BJ (cell line): ENCODE measurements at regions of chr5 and their contacts with region 1.

Region 1: GRCh38 chr5:141878711-141879425 is 658 bp upstream of the PCDH1 start:
- DNase-seq: peak; percentile 26
- H3K4me3 ChIP-seq: peak overlapping the region; percentile 14
- H3K27me3 ChIP-seq: peaks cover 63% of the 10 kb centered on the region
- CTCF ChIP-seq: peak; percentile 98

Region 2: GRCh38 chr5:141691867-141692532 is 186.9 kb before region 1 on chr5:
- CTCF ChIA-PET with region 1: interaction called, 341 read pairs
- POLR2A ChIA-PET with region 1: no interaction called
- DNase-seq: peak; percentile 15
- H3K4me3 ChIP-seq: peak overlapping the region; percentile 37
- H3K27me3 ChIP-seq: peaks cover 17% of the 10 kb centered on the region
- CTCF ChIP-seq: peak; percentile 97

Region 3: GRCh38 chr5:141762790-141763368 is 116.0 kb before region 1 on chr5:
- CTCF ChIA-PET with region 1: interaction called, 64 read pairs
- POLR2A ChIA-PET with region 1: no interaction called
- DNase-seq: no peak
- H3K4me3 ChIP-seq: no peak overlapping the region
- H3K27me3 ChIP-seq: peaks cover 42% of the 10 kb centered on the region
- CTCF ChIP-seq: no peak

Region 4: DNA sequence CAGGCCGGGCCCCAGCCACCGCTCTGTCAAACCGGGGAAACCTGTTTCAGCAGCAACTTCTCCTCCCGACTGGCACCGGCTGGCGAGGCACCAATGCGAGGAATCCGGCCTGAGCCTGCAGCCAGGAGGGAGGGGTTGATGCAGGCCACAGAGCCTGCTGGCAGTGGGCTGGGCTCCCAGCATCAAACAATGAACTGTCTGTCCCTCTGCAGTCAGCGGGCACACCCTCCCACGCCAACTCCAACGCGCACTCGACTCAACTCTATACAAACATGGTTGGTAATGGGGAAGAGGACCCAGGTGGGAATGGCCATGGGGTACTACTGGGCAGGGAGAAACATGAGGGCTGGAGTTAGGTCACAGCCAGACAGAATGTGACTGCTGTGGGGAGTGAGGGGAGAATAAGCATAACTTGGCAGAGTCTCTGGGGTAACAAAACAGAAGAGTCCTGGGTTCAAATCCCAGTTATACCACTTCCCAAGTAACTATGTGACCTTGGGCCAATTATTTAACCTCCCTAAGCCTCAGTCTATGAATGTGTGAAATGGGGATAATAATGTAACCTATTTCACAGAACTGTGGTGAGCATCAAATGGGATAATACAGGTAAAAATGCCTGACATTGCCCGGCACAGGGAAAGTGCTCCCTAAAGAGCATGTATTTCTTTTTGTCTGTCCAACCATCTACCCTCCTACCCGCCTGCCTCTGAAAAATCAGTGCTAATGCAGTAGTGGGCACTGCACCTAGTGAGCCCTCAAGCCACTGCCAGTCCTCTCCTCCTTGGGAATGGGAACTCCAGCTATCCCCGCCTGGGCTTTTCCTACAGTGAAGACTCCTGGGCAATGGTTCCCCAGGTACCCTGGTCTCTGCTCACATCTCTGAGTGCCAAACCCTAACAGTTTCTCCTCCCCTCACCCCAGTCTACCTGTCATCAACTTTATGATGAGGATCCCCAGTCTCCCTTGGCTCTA is 12.4 kb before region 1 on chr5:
- CTCF ChIA-PET with region 1: interaction called, 31 read pairs
- POLR2A ChIA-PET with region 1: no interaction called
- DNase-seq: no peak
- H3K4me3 ChIP-seq: no peak overlapping the region
- H3K27me3 ChIP-seq: peaks cover 17% of the 10 kb centered on the region
- CTCF ChIP-seq: no peak

Region 5: GRCh38 chr5:141923448-141924352 is 44.8 kb after region 1 on chr5 and contains the start of gene DELE1:
- CTCF ChIA-PET with region 1: interaction called, 10 read pairs
- POLR2A ChIA-PET with region 1: no interaction called
- DNase-seq: peak; percentile 62
- H3K4me3 ChIP-seq: peak within 1 kb of the TSS; percentile 65
- H3K27me3 ChIP-seq: no peaks in the 10 kb centered on the region
- CTCF ChIP-seq: no peak
- polyA plus RNA-seq, gene DELE1: 65.4 and 110 TPM in 2 replicates